Psoas muscle (tissue), 8 donors: ENCODE measurements at regions of chr17 and their contacts with region 1.

Region 1: DNA sequence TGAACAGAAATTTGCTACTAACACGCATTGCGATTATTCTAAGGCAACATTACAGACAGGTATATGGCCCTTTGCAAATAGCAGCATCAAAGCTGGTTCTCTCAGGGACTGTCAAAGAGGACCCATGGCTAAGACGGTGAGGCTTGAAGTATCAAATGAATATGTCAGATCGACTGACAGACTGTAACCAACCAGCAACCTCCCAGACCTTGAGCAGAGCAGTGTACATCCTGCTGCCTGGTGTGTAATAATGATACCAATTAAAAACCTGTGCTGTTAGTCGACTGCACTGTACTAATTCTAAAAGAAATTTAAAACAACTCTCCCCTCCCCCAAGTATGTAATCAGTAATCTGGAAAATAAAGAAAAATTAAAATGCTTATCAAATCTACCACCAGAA is 35.9 kb upstream of the GHDC start:
- DNase-seq: no peak
- ATAC-seq: no peak
- H3K4me3 ChIP-seq: no peak overlapping the region
- H3K27ac ChIP-seq: peak overlapping the region; percentile 83
- H3K4me1 ChIP-seq: peaks cover 55% of the 10 kb centered on the region
- H3K27me3 ChIP-seq: no peaks in the 10 kb centered on the region
- CTCF ChIP-seq: no peak

Region 2: DNA sequence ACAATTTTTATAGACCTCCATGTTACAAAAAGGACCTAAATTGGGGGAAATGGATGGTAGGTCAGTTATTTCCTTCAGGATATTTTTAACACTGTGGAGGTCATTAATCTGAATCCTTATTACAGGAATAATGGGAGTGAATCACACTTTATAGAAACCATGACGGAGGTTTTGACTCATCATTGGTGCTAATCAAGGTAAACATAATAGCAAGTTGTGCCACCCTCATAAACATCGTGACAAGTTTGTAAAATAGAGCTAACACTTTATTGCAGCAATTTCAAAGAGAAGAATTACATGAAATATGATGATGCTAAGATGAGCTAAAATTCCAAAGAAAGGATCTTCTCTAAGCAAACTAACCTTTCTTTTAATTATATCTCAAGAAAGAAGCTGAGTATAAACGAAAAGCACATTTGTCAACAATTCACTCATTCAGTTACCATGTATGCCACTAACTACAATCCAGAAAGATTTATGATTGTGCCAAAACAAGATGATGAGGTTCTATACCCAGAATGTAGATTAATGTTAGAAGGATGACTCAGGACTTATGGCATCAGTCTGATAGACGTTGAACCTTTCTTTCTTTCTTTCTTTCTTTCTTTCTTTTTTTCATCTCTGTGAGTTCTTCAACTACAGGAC is 22.4 kb after region 1 on chr17:
- intact Hi-C with region 1: no loop called
- DNase-seq: no peak
- ATAC-seq: peak in 3 of 4 donors; percentile 72 to 81 (median 74)
- H3K4me3 ChIP-seq: peak overlapping the region; percentile 26
- H3K27ac ChIP-seq: peak overlapping the region; percentile 79
- H3K4me1 ChIP-seq: peaks cover 60% of the 10 kb centered on the region
- H3K27me3 ChIP-seq: no peaks in the 10 kb centered on the region
- CTCF ChIP-seq: no peak

Region 3: DNA sequence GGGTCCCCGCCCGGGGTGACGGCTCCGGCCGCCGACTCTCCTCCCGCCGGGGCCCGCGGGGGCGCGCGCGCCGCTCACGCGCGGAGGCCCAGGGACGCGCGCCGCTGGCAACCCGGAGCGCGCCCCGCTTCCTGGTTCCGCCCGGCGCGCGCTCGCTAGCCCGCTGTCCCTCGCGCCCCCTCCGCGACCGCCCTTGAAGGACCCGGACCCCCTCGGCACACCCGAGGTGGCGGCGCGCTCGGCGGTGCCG is 46.1 kb after region 1 on chr17 and contains the start of gene STAT5B:
- intact Hi-C with region 1: loop called (anchors 5 kb)
- DNase-seq: peak; percentile 81 to 87
- ATAC-seq: peak; percentile 85 to 87 (median 86)
- H3K4me3 ChIP-seq: peak within 1 kb of the TSS; percentile 93
- H3K27ac ChIP-seq: peak within 1 kb of the TSS; percentile 89
- H3K4me1 ChIP-seq: peaks cover 45% of the 10 kb centered on the region
- H3K27me3 ChIP-seq: no peaks in the 10 kb centered on the region
- CTCF ChIP-seq: no peak
- total RNA-seq, gene STAT5B: 68.8 to 90.1 (median 81.6) TPM